ENCODE measurements at regions of chr4 and their contacts with region 1.

Region 1: GRCh38 chr4:88284439-88285234 is at the start of gene PPM1K:
- DNase-seq: peak; percentile 99
- ATAC-seq: peak; percentile 83
- H3K4me3 ChIP-seq: peak within 1 kb of the TSS; percentile 67 to 99 (median 96)
- H3K4me3 Mint-ChIP-seq: peak within 1 kb of the TSS; percentile 95
- H3K27ac ChIP-seq: peak within 1 kb of the TSS; percentile 97 to 98
- H3K27ac Mint-ChIP-seq: peak within 1 kb of the TSS; percentile 96
- H3K4me1 ChIP-seq: peaks cover 40 to 49% of the 10 kb centered on the region in 2 donors
- H3K4me1 Mint-ChIP-seq: peaks cover 53% of the 10 kb centered on the region
- H3K27me3 ChIP-seq: no peaks in the 10 kb centered on the region
- H3K27me3 Mint-ChIP-seq: no peaks in the 10 kb centered on the region
- CTCF ChIP-seq: no peak
- total RNA-seq, gene PPM1K: 145 and 146 TPM in 2 replicates

Region 2: GRCh38 chr4:88217920-88218319 is 66.7 kb before region 1 on chr4:
- CTCF ChIA-PET with region 1: interaction called, 14 read pairs
- POLR2A ChIA-PET with region 1: no interaction called
- intact Hi-C with region 1: loop called (anchors 2 kb)
- DNase-seq: no peak
- ATAC-seq: no peak
- H3K4me3 ChIP-seq: no peak overlapping the region
- H3K4me3 Mint-ChIP-seq: no peak overlapping the region
- H3K27ac ChIP-seq: no peak overlapping the region
- H3K27ac Mint-ChIP-seq: no peak overlapping the region
- H3K4me1 ChIP-seq: peaks cover 0 to 3% of the 10 kb centered on the region in 2 donors
- H3K4me1 Mint-ChIP-seq: peaks cover 5% of the 10 kb centered on the region
- H3K27me3 ChIP-seq: peaks cover 0 to 2% (median 0%) of the 10 kb centered on the region in 4 experiments
- H3K27me3 Mint-ChIP-seq: peaks cover 3% of the 10 kb centered on the region
- CTCF ChIP-seq: no peak

Region 3: DNA sequence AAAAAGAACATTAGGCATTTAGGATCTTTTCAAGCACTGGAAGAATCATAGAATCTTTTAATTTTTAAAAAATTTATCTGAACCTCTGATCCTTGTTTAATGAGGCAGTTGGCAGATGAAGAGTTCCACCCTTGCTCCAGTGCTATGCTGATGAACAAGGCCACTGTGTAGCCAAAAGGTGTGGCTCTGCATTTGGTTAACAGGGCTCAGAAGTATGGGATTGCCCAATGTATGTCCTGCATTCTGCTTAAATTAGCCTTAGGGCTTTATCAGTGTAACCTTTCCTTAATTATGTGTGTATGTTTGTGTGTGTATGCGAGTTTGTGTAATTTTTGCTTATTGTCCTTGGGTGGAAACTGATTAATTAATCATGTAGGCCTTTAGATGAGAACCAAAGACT is 43.0 kb after region 1 on chr4:
- CTCF ChIA-PET with region 1: no interaction called
- POLR2A ChIA-PET with region 1: no interaction called
- intact Hi-C with region 1: no loop called
- DNase-seq: no peak
- ATAC-seq: no peak
- H3K4me3 ChIP-seq: no peak overlapping the region
- H3K4me3 Mint-ChIP-seq: no peak overlapping the region
- H3K27ac ChIP-seq: no peak overlapping the region
- H3K27ac Mint-ChIP-seq: no peak overlapping the region
- H3K4me1 ChIP-seq: peaks cover 0 to 2% of the 10 kb centered on the region in 2 donors
- H3K4me1 Mint-ChIP-seq: no peaks in the 10 kb centered on the region
- H3K27me3 ChIP-seq: no peaks in the 10 kb centered on the region
- H3K27me3 Mint-ChIP-seq: no peaks in the 10 kb centered on the region
- CTCF ChIP-seq: no peak

Region 4: DNA sequence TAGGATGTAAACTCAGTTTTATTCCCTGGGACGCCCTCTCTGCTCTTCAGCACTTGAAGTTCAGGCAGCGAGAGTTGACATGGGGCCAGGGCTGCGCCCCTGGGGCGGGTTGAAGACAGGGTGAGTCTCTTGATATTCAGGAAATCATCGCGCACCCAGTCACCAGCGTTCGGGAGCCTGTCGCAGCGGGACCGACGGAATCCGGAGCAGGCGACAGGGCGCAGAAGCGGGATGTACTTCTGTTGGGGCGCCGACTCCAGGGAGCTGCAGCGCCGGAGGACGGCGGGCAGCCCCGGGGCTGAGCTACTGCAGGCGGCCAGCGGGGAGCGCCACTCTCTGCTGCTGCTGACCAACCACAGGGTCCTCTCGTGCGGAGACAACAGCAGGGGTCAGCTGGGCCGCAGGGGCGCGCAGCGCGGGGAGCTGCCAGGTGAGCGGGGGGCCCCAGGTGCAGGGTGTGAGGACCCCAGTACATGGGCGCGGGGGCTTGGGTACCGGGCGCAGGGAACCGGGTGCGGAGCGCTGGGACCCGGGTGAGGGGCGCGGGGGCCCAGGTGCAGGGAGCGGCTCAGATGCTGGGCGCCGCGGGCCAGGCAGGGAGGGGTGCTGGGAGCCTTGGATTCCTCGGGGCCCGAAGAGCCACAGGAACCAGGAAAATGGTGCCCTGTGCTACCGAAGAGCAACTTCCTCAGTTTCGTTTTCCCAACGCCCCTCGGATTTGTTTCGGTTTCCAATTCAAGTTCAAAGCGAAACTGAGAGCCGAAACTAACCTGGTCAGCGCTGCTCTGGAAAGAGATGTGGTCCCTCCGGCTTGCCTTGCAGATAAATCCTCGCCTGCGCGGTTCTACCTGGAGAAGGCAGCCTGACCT is 94.3 kb after region 1 on chr4 and contains the start of gene HERC6:
- CTCF ChIA-PET with region 1: interaction called, 23 read pairs
- POLR2A ChIA-PET with region 1: interaction called, 13 read pairs
- intact Hi-C with region 1: loop called (anchors 1 kb)
- DNase-seq: peak; percentile 90
- ATAC-seq: peak; percentile 84
- H3K4me3 ChIP-seq: peak within 1 kb of the TSS; percentile 74 to 99 (median 96)
- H3K4me3 Mint-ChIP-seq: peak within 1 kb of the TSS; percentile 90
- H3K27ac ChIP-seq: peak within 1 kb of the TSS; percentile 84 to 89
- H3K27ac Mint-ChIP-seq: peak within 1 kb of the TSS; percentile 88
- H3K4me1 ChIP-seq: peaks cover 10 to 15% of the 10 kb centered on the region in 2 donors
- H3K4me1 Mint-ChIP-seq: peaks cover 26% of the 10 kb centered on the region
- H3K27me3 ChIP-seq: no peaks in the 10 kb centered on the region
- H3K27me3 Mint-ChIP-seq: no peaks in the 10 kb centered on the region
- CTCF ChIP-seq: peak; percentile 78
- total RNA-seq, gene HERC6: 10.9 and 11.3 TPM in 2 replicates

Region 5: DNA sequence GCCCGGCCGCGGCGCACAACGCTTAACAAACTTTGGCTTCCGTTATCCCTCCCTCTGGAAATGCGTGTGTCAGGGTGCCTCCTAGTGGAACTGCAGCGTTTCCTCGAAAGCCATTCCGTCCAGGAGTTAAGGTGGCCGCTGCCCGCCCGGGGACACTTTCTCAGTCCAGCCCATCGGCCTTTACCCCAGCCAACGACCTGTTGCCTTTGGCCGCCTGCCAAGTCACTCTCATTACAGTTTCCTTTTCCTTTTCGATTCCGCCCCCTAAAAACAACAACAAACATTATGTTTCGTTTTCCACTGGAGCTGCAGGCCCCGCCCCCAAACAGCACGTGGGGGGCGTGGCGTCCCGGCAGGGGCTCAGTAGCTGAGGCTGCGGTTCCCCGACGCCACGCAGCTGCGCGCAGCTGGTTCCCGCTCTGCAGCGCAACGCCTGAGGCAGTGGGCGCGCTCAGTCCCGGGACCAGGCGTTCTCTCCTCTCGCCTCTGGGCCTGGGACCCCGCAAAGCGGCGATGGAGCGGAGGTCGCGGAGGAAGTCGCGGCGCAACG is 172.2 kb after region 1 on chr4 and contains the start of gene HERC5:
- CTCF ChIA-PET with region 1: interaction called, 5 read pairs
- POLR2A ChIA-PET with region 1: interaction called, 24 read pairs
- intact Hi-C with region 1: loop called (anchors 1 kb)
- DNase-seq: peak; percentile 96
- ATAC-seq: peak; percentile 94
- H3K4me3 ChIP-seq: peak within 1 kb of the TSS; percentile 69 to 93 (median 85)
- H3K4me3 Mint-ChIP-seq: peak within 1 kb of the TSS; percentile 100
- H3K27ac ChIP-seq: peak within 1 kb of the TSS; percentile 52 to 70
- H3K27ac Mint-ChIP-seq: peak within 1 kb of the TSS; percentile 99
- H3K4me1 ChIP-seq: peaks cover 11 to 16% of the 10 kb centered on the region in 2 donors
- H3K4me1 Mint-ChIP-seq: peaks cover 19% of the 10 kb centered on the region
- H3K27me3 ChIP-seq: no peaks in the 10 kb centered on the region
- H3K27me3 Mint-ChIP-seq: no peaks in the 10 kb centered on the region
- CTCF ChIP-seq: no peak
- total RNA-seq, gene HERC5: 10.6 and 12.0 TPM in 2 replicates

Region 6: GRCh38 chr4:88523325-88524129 is 238.9 kb after region 1 on chr4 and contains the start of gene PYURF:
- CTCF ChIA-PET with region 1: no interaction called
- POLR2A ChIA-PET with region 1: interaction called, 6 read pairs
- intact Hi-C with region 1: loop called (anchors 2 kb)
- DNase-seq: peak; percentile 82
- ATAC-seq: peak; percentile 92
- H3K4me3 ChIP-seq: peak within 1 kb of the TSS; percentile 66 to 88 (median 68)
- H3K4me3 Mint-ChIP-seq: peak within 1 kb of the TSS; percentile 90
- H3K27ac ChIP-seq: peak within 1 kb of the TSS; percentile 28 to 70
- H3K27ac Mint-ChIP-seq: peak within 1 kb of the TSS; percentile 87
- H3K4me1 ChIP-seq: peaks cover 12 to 18% of the 10 kb centered on the region in 2 donors
- H3K4me1 Mint-ChIP-seq: peaks cover 20% of the 10 kb centered on the region
- H3K27me3 ChIP-seq: no peaks in the 10 kb centered on the region
- H3K27me3 Mint-ChIP-seq: no peaks in the 10 kb centered on the region
- CTCF ChIP-seq: no peak
- total RNA-seq, gene PYURF: 38.1 and 40.5 TPM in 2 replicates

Region 7: GRCh38 chr4:89110986-89111832 is 826.6 kb after region 1 on chr4 and contains the start of gene TIGD2:
- CTCF ChIA-PET with region 1: no interaction called
- POLR2A ChIA-PET with region 1: no interaction called
- intact Hi-C with region 1: loop called (anchors 5 kb)
- DNase-seq: peak; percentile 94
- ATAC-seq: peak; percentile 92
- H3K4me3 ChIP-seq: peak within 1 kb of the TSS; percentile 70 to 88 (median 82)
- H3K4me3 Mint-ChIP-seq: peak within 1 kb of the TSS; percentile 88
- H3K27ac ChIP-seq: peak within 1 kb of the TSS; percentile 30 to 85
- H3K27ac Mint-ChIP-seq: peak within 1 kb of the TSS; percentile 85
- H3K4me1 ChIP-seq: peaks cover 14 to 18% of the 10 kb centered on the region in 2 donors
- H3K4me1 Mint-ChIP-seq: peaks cover 27% of the 10 kb centered on the region
- H3K27me3 ChIP-seq: peaks cover 0 to 4% (median 1%) of the 10 kb centered on the region in 4 experiments
- H3K27me3 Mint-ChIP-seq: peaks cover 2% of the 10 kb centered on the region
- CTCF ChIP-seq: peak; percentile 94
- total RNA-seq, gene TIGD2: 8.6 and 9.5 TPM in 2 replicates

Measured in B cell (primary cell).